ENCODE measurements at regions of chr1 and their contacts with region 1.

Region 1: GRCh38 chr1:27752360-27752759 is 20.7 kb upstream of the STX12 start:
- DNase-seq: no peak
- H3K4me3 ChIP-seq: no peak overlapping the region
- H3K27ac ChIP-seq: no peak overlapping the region
- H3K4me1 ChIP-seq: peaks cover 8% of the 10 kb centered on the region in 2 donors
- H3K27me3 ChIP-seq: no peaks in the 10 kb centered on the region
- CTCF ChIP-seq: no peak
- POLR2A ChIP-seq: no peak

Region 2: DNA sequence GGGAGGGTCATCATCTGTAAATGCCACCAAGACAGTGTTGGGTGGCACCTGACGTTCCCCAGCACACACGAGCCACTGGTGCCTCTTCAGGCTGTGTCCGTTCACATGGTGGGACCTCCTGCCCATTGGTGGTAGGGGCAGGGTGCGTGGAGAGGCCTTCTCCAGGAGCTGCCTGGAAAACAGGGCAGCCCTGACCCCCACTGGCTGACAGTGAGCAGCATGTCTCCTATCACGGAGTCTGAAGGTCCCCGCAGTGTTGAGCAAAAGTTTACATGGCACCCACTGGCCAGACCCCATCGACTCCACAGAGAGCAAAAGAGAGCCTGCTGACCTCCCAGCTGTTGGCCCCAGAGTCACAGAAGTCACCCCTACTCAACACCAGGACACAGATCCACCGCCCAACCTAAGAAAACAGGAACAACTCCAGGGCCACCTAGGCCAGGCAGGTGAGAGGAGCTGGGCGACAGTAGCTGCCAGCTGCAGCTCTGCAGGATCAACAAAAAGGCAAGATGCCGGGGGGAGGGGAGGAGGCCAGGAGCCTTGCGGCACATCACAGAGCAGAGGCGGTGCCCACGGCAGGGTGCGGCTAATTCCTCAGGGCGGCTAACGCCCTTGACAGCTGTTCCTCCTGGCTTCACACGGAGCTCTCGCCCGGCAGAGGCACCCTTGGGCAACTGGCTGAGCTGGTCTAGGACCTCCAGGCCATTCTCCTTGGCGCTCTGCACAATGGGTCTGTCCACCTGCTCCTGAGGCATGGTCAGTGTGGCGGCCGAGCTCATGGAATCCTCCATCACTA is 65.9 kb before region 1 on chr1:
- intact Hi-C with region 1: no loop called
- DNase-seq: peak; percentile 60 to 62
- H3K4me3 ChIP-seq: no peak overlapping the region
- H3K27ac ChIP-seq: no peak overlapping the region
- H3K4me1 ChIP-seq: no peaks in the 10 kb centered on the region
- H3K27me3 ChIP-seq: no peaks in the 10 kb centered on the region
- CTCF ChIP-seq: no peak
- POLR2A ChIP-seq: no peak

Region 3: DNA sequence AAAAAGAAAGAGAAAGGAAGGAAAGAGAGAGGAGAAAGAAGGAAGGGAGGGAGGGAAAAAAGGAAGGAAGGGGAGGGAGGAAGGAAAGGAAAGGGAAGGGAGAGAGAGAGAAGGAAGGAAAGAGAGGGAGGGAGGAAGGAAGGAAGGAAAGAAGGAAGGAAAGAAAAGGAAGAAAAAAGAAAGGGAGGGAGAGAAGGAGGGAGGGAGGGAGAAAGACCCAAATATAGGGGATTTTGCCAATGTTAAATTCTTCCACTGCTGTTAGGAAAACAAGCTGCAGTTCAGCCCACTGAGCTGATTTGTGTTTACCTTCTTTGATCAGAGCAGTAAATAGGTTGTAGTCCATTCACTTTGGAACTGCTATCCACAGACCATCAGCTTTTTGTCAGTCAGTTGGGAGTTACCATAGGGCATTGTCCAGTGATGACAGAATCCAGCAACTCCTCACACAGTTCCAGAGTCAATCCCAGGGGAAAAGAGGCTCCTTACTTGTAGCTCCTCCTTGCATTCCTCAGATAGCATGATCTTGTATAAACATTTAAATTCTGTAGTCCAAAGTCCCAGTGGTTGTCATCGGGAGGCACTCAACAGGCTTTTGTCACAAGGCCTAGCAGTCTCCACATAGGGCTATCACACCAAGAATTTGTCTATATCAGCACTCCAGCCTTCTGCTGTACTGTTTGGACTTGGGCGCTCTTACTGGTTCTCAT is 64.7 kb after region 1 on chr1:
- intact Hi-C with region 1: loop called (anchors 10 kb)
- DNase-seq: peak; percentile 11 to 45
- H3K4me3 ChIP-seq: no peak overlapping the region
- H3K27ac ChIP-seq: peak overlapping the region; percentile 60 to 79 (median 78)
- H3K4me1 ChIP-seq: peaks cover 11 to 21% of the 10 kb centered on the region in 2 donors
- H3K27me3 ChIP-seq: no peaks in the 10 kb centered on the region
- CTCF ChIP-seq: no peak
- POLR2A ChIP-seq: no peak

Region 4: DNA sequence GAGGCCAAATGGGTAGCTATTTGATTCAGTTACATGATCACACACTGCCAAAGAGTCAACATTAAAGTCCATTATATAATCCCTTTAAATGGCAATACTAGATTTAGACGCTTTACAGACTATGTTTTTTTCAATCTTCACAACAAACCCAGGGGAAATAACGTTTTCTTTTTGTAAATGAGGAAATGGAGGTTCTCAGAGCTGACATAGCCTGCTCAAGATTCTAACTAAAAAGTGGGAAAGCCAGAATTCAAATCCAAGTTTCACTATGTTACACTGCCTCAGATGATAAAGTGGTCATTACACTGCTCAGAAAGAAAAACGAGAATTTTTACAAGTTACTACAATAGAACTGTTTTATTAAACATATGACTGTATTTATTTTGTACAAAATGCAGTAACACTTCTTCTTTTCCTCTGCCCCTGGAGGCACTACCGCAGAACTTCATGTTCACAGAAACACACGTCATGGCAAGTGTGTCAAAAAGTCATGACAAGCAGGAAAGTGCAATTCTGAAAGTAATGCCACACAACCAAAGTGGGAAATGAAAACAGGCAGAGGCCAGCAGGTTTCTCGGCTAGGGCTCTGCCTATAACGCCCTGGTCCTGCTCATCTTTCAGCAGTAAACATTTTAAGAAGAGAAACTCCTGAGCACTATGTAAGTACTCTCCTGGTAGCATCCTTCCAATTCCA is 139.0 kb after region 1 on chr1:
- intact Hi-C with region 1: no loop called
- DNase-seq: no peak
- H3K4me3 ChIP-seq: no peak overlapping the region
- H3K27ac ChIP-seq: peak overlapping the region in 2 of 3 donors; percentile 22 to 31
- H3K4me1 ChIP-seq: peaks cover 0 to 10% of the 10 kb centered on the region in 2 donors
- H3K27me3 ChIP-seq: no peaks in the 10 kb centered on the region
- CTCF ChIP-seq: no peak
- POLR2A ChIP-seq: no peak

Measured in thyroid gland (tissue), 4 donors.